HEK293T (cell line): ENCODE measurements at regions of chr11 and their contacts with region 1.

Region 1: DNA sequence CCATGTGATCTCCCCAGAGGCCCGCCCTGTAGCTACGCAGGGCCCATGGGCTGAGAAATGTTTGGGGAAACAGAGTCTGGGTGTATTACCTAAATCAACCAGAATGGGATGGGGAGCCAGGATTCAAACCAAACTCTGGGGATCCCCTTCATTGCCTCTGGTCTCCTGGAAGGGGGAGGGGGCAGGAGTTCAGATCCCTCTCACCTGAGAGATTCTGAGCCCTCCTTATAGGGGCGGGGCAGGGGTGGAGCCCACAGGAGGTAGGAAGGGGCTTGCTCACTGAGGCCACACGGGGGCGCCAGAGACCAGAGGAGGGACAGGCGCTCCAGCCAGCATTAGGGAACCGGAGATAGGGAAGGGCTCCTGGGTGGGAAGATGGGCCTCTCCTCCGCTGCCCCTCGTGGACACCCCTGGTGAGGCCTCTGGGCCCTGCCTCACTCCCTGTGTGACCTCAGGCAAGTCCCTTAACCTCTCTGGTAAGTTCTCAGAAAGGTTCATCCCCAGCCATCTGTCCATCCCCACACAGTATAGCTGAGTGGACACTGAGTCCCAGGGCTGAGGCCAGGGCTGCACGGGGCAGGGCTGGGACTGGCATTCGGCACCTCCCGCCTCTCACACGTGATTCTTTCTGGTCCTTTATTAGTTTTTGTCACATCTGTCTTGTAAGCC is 2.7 kb upstream of the CDC42BPG start:
- DNase-seq: peak; percentile 93

Region 2: DNA sequence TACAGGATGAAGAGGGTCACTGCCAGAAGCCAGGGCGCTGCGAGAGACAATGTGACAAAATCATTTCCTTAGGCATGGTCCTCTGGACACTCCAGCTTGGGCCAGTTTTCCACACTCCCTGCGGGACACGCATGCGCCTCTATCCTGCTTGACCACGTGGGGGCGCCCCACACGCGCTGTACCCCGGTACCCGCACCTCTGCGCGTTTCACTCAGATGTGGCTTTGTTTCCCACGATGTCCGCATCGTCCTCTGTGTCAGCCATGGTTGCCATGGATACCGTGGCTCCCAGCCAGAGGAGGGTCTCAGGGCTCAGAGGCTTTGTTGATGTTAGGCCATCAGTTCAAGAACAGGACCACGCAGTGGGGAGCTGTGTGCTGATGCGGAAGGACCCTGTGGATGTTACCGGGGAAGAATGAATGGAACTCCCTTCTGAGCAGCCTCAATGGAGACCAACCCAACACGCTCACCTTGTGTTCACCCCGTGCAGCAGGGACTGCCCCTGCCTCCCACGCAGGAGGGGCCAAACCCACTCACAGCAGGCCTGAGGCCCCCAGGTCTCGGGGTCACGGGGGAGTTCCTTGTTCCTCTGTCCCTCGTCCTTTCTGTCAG is 357.2 kb before region 1 on chr11:
- CTCF ChIA-PET with region 1: no interaction called
- POLR2A ChIA-PET with region 1: no interaction called
- DNase-seq: peak; percentile 79

Region 3: DNA sequence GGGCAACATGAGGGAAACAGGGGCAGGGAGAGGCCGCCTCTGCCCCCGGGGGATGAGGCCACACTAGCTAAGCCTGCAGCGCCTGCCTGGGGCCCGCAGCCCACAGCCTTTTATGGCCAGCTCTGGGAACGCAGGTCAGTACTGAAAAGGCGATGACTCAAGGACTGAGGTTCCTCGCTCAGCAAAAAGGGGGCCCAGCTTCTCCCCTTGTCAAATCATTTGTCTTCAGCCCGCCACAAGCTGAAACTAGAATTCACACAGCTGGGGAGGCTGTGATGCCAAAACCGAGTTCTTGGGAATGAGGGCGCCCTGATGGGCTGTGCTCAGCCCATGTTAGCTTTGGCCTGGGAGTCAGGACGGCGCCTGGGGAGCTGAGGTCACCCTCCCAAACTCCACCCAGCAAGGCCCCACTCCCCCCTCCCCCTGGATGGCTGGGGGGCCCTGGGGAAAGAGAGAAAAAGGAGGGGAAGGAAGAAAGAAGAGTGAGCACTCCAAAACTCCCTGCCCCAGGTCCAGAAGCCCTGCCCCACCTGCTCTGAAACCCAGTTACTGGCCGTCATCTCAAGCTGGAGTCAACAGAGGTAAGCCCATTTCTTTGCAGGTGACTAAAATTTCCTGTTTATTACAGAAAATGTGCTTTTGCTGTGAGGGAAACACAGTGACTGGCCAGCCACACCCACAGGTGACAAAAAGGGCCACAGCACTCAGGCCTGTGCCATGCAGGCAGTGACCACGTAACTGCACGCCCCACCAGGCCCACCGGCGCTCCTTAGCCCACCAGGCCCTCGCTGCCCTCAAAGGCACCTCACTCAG is 17.5 kb after region 1 on chr11:
- CTCF ChIA-PET with region 1: interaction called, 10 read pairs
- POLR2A ChIA-PET with region 1: no interaction called
- DNase-seq: no peak

Region 4: GRCh38 chr11:64878494-64879243 is 31.5 kb after region 1 on chr11 and contains the start of gene EHD1:
- CTCF ChIA-PET with region 1: interaction called, 13 read pairs
- POLR2A ChIA-PET with region 1: no interaction called
- DNase-seq: peak; percentile 100

Region 5: DNA sequence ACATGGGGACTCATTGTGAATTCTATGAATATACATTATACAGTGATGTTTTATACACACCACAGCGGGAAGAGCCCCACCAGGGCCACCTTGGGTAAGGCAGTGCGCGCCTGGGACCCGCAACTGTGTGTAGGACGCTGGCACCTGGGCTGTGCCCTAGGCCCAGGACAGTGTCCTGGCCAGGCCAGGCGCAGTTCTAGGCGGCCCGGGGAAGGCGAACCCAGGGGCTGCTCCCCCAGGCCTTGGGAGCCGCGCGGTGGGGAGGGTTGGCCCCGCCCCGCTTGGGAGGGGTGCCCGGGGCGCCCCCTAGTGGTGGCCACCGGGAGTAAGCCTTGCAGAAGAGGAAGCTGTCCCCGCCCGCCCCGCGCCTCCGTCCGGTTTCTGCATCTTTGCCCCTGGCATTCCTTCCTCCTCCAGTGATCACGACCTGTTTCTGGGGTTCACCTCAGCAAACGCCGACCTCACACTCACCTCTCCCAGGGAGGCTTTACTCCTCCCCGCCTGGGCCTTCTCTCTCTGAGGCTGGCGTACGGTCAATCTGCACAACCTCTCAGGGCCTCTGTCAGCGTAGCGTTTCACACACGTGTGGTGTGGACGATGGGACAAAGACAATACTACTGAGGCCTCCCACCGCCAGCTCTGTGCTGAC is 40.7 kb after region 1 on chr11:
- CTCF ChIA-PET with region 1: interaction called, 10 read pairs
- POLR2A ChIA-PET with region 1: interaction called, 13 read pairs
- DNase-seq: peak; percentile 90

Region 6: DNA sequence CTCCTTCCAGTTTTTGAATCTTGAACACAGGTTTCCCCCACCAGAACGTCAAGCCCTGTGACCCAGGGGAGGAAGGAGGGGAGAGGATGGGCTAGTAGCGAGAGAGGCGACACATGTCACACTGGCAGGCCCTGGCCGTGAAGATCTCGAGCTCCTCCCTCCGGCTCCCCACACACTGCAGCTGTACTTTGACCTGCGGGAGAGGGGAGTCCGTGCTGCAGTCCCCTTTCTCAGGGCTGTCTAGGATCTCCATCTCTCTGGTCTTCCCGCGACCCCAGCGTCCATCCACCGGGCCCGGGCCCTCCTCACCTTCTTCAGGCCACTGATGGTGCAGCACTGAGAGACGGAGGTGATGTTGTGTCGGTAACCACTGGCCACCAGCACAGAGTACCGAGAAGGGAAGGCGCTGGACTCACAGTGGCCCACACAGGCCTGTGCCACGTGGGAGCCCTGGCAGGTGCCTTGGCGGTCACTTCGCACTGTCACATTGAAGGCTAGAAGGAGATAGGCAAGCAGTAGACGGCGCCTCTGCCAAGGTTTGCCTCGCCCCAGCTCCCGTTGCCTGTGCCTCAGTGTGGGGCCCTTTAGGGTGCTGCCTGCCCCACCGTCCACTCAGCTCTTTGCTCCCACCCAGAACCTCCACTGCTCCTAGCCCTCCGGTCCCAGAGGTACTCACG is 87.7 kb after region 1 on chr11:
- CTCF ChIA-PET with region 1: no interaction called
- POLR2A ChIA-PET with region 1: no interaction called
- DNase-seq: no peak